ENCODE measurements at regions of chr12 and their contacts with region 1.

Region 1: GRCh38 chr12:2267703-2268501 is 215.1 kb downstream of the CACNA1C start:
- DNase-seq: peak in 1 of 2 donors; percentile 91
- H3K4me3 ChIP-seq: peak overlapping the region; percentile 2 to 4
- H3K27ac ChIP-seq: peak overlapping the region; percentile 84 to 90
- H3K4me1 ChIP-seq: peaks cover 34 to 60% of the 10 kb centered on the region in 2 donors
- H3K27me3 ChIP-seq: no peaks in the 10 kb centered on the region
- CTCF ChIP-seq: no peak

Region 2: DNA sequence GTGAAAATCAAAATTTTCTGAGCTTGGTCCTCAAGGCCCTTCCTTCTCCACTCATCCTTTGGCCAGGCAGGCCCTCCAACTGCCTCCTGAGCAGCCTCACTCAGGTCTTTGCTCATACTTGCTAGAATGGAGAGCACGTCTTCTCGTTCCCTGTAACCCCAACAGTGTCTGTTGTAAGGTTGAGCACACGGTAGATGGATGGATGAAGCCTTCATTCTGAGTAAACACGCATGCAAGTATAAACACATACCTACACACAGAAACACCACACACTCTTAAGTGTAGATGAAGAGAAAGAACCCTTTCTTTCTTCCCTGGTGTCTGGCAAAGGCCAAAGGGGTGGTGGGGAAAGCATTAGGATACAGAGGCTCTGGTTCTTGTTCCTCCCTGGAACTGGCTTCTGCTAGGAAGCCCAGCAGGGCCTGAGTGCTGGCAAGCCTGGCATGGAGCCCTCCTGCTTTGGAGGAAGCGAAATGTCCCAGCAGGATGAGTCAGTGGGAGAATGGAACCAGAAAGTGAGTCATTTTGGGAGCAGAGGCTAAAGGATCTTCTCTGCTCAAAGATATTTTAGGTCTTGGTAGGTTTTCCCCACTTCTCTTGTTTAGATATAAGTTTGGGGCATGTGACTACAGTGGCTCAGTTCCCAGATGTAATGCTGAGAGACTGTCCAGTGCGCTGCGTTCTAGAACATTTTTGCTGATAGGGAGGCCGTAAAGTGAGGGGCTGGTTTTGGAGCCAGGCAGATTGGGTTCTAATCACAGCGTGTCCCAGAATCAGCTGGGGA is 87.8 kb before region 1 on chr12:
- intact Hi-C with region 1: loop called (anchors 5 kb)
- DNase-seq: peak; percentile 47 to 93
- H3K4me3 ChIP-seq: no peak overlapping the region
- H3K27ac ChIP-seq: peak overlapping the region; percentile 73 to 80
- H3K4me1 ChIP-seq: peaks cover 25 to 33% of the 10 kb centered on the region in 2 donors
- H3K27me3 ChIP-seq: no peaks in the 10 kb centered on the region
- CTCF ChIP-seq: no peak